ENCODE measurements at regions of chr1 and their contacts with region 1.

Region 1: DNA sequence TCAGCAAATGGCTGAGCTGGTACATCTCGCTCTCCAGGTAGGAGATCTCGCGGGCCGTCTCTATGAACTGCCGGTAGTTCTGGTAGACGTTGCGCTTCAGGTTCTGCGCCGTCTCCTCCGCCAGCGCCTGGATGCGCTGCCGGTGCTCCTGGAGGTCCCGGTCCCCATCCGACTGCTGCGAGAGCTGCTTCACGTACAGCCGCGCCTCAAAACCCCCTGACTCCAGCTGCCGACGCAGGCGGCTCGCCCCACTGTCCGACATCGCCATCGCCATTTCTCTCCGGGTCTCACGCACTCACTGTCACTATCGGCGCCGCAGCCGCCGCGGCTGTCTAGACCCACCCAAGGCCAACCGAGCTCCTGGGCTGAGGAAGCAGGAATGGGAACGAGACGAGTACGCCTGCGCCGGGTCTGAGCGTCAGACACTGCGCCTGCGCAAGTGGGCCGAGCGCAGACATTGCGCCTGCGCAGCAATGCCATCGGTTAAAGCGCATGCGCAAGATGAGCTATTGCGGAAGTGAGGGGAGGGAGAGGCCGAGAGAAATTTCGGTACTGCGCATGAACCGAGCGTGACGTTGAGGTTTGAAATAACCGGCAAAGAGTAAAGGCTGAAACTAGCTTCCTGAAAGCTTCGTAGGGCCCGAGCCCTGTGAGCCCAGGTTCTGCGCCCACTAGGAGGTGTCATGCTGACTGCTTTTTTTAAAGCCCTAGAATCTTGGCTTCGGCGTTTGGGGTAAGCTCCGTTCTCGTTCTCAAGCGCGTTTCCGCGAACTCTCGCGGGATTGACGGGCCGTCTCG is at the start of gene EXOC8:
- DNase-seq: peak; percentile 96 to 98 (median 97)
- H3K4me3 ChIP-seq: peak within 1 kb of the TSS; percentile 89 to 100 (median 99)
- H3K27ac ChIP-seq: peak within 1 kb of the TSS; percentile 99
- H3K4me1 ChIP-seq: peaks cover 28 to 52% (median 44%) of the 10 kb centered on the region in 4 experiments
- H3K27me3 ChIP-seq: no peaks in the 10 kb centered on the region

Region 2: DNA sequence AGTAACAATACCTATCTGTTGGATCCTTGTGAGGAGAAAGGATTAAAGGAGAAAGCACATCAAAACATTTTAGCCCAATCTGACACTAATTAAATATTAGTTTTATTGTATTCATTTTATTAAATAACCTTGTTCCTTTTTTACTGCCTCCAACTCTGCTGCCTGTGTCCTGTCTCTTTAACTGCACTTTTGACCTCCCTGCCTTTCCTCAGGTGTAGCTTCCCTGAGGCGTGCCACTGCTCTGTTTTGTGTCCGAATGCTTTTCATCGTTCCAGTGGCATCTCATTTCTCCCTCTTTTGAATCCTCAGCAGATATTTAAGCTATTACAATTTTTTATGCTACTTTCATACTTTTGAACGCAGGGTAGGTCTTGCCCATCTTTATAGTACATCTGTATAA is 10.8 kb after region 1 on chr1:
- CTCF ChIA-PET with region 1: interaction called, 16 read pairs
- POLR2A ChIA-PET with region 1: no interaction called
- DNase-seq: no peak
- H3K4me3 ChIP-seq: no peak overlapping the region
- H3K27ac ChIP-seq: no peak overlapping the region
- H3K4me1 ChIP-seq: no peaks in the 10 kb centered on the region
- H3K27me3 ChIP-seq: no peaks in the 10 kb centered on the region